Activated B cell treated with CpG ODN at 0.5 μM for 24 hours (primary cell): ENCODE measurements at regions of chr13 and their contacts with region 1.

Region 1: GRCh38 chr13:73902296-73902695 is 231.9 kb downstream of the KLF12 start:
- DNase-seq: no peak
- ATAC-seq: no peak
- H3K4me3 Mint-ChIP-seq: no peak overlapping the region
- H3K27ac Mint-ChIP-seq: peak overlapping the region; percentile 6
- H3K4me1 Mint-ChIP-seq: peaks cover 49% of the 10 kb centered on the region
- H3K27me3 Mint-ChIP-seq: no peaks in the 10 kb centered on the region
- CTCF ChIP-seq: no peak

Region 2: GRCh38 chr13:73849292-73849691 is 53.0 kb before region 1 on chr13:
- CTCF ChIA-PET with region 1: no interaction called
- POLR2A ChIA-PET with region 1: no interaction called
- intact Hi-C with region 1: loop called (anchors 5 kb)
- DNase-seq: no peak
- ATAC-seq: peak; percentile 45
- H3K4me3 Mint-ChIP-seq: no peak overlapping the region
- H3K27ac Mint-ChIP-seq: no peak overlapping the region
- H3K4me1 Mint-ChIP-seq: peaks cover 30% of the 10 kb centered on the region
- H3K27me3 Mint-ChIP-seq: no peaks in the 10 kb centered on the region
- CTCF ChIP-seq: no peak

Region 3: DNA sequence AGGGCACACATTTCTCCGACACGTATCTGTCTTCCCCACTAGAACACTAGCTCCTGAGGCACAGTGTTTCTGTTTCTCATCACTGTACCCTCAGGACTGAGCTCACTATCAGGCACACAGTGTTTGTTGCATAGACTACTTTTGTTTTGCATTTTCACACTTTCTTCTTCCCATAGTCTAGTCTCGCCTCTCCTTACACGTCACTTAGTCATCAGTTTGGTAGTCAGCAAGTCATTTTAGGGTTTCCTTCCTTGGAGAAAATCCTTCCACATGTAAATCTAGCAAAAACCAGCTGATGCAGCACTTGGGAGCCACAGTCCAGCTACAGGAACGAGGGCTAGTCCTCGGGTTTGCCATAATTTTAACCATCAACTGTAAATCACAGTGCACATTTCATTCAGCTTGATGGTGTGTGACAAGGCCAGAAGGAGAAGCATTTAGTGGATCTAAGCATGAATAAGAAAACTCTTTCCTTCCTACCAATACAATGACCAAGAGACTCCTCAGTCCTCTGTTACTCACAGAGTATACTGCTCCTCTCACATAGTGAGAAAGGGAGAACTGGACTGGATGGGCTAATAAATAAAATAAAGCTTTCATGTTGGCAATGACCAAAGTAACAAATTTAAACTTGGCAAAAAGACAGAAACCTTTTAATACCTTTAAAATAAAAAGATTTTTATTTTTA is 10.9 kb after region 1 on chr13:
- CTCF ChIA-PET with region 1: no interaction called
- POLR2A ChIA-PET with region 1: no interaction called
- intact Hi-C with region 1: loop called (anchors 1 kb)
- DNase-seq: no peak
- ATAC-seq: no peak
- H3K4me3 Mint-ChIP-seq: no peak overlapping the region
- H3K27ac Mint-ChIP-seq: no peak overlapping the region
- H3K4me1 Mint-ChIP-seq: peaks cover 42% of the 10 kb centered on the region
- H3K27me3 Mint-ChIP-seq: no peaks in the 10 kb centered on the region
- CTCF ChIP-seq: no peak

Region 4: DNA sequence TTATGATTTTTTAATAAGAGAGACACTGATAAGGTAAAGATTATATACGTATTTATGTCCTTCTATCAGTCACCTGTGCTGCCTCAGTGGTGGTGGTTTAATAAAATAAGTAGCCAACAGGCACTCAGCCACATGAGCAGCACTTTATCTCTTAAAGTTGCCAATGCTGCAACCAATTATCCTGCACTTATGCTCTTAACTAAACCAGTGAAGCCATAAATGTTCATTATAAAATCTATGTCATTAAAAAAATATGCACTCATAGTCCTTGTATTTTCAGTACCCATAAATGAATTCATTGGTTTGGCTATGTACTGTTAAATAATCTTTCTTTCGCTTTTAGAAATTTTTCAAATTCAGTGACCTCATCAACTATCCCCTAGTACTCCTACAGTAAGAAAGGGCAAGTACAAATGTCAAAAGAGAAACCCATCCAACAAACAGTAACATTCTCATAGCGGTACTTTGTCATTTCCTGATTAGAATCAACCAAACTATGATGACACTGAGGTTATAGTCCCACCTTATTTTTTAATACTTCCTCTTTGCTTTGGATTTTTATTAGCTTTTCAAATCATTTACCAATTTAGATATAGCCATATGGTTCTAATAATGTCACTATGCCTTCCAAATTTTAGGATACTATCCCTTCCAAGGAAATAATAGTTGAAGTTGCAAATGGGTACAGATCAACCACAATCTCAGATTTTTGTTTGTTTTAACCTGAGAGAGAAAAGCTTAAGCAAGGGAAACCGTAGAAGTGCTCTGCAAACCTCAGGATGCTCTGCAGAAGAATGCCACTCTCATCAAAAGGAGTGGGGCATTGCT is 41.1 kb after region 1 on chr13:
- CTCF ChIA-PET with region 1: no interaction called
- POLR2A ChIA-PET with region 1: no interaction called
- intact Hi-C with region 1: loop called (anchors 5 kb)
- DNase-seq: no peak
- ATAC-seq: peak; percentile 84
- H3K4me3 Mint-ChIP-seq: peak overlapping the region; percentile 13
- H3K27ac Mint-ChIP-seq: peak overlapping the region; percentile 59
- H3K4me1 Mint-ChIP-seq: peaks cover 36% of the 10 kb centered on the region
- H3K27me3 Mint-ChIP-seq: no peaks in the 10 kb centered on the region
- CTCF ChIP-seq: no peak

Region 5: DNA sequence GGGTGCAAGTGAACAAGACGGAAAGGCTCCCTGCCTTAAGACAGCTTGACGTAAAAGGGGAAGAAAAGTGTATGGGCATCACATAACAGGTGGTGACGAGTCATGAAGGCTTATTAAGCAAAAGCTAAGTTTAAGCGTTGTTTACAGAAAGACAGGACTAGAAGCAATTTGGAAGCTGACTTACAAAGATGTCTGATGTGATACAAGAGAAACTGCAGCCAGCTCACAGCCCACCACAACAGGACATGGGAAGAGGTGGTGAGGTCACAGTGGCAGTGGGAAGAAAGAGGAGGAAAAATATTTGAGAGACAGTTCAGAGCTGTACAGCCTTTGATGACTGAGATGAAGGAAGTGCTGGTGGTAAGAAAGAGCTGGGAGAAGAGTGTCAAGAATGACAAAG is 50.4 kb after region 1 on chr13:
- CTCF ChIA-PET with region 1: no interaction called
- POLR2A ChIA-PET with region 1: interaction called, 11 read pairs
- intact Hi-C with region 1: no loop called
- DNase-seq: no peak
- ATAC-seq: no peak
- H3K4me3 Mint-ChIP-seq: no peak overlapping the region
- H3K27ac Mint-ChIP-seq: no peak overlapping the region
- H3K4me1 Mint-ChIP-seq: peaks cover 51% of the 10 kb centered on the region
- H3K27me3 Mint-ChIP-seq: no peaks in the 10 kb centered on the region
- CTCF ChIP-seq: no peak